Activated CD8-positive, alpha-beta T cell treated with anti-CD3 and anti-CD28 coated beads for 36 hours (primary cell): ENCODE measurements at regions of chr12 and their contacts with region 1.

Region 1: GRCh38 chr12:57261428-57261865 is 10.5 kb upstream of the STAC3 start:
- DNase-seq: no peak
- ATAC-seq: no peak
- H3K4me3 Mint-ChIP-seq: no peak overlapping the region
- H3K27ac Mint-ChIP-seq: no peak overlapping the region
- H3K4me1 Mint-ChIP-seq: peaks cover 4% of the 10 kb centered on the region
- H3K27me3 Mint-ChIP-seq: no peaks in the 10 kb centered on the region
- CTCF ChIP-seq: no peak

Region 2: GRCh38 chr12:57233357-57234232 is 27.9 kb before region 1 on chr12:
- CTCF ChIA-PET with region 1: no interaction called
- POLR2A ChIA-PET with region 1: no interaction called
- intact Hi-C with region 1: no loop called
- DNase-seq: no peak
- ATAC-seq: no peak
- H3K4me3 Mint-ChIP-seq: no peak overlapping the region
- H3K27ac Mint-ChIP-seq: no peak overlapping the region
- H3K4me1 Mint-ChIP-seq: peaks cover 61% of the 10 kb centered on the region
- H3K27me3 Mint-ChIP-seq: peaks cover 13% of the 10 kb centered on the region
- CTCF ChIP-seq: no peak

Region 3: GRCh38 chr12:57248934-57249742 is 12.3 kb before region 1 on chr12:
- CTCF ChIA-PET with region 1: interaction called, 22 read pairs
- POLR2A ChIA-PET with region 1: interaction called, 3 read pairs
- intact Hi-C with region 1: no loop called
- DNase-seq: no peak
- ATAC-seq: peak; percentile 53
- H3K4me3 Mint-ChIP-seq: peak overlapping the region; percentile 15
- H3K27ac Mint-ChIP-seq: no peak overlapping the region
- H3K4me1 Mint-ChIP-seq: peaks cover 7% of the 10 kb centered on the region
- H3K27me3 Mint-ChIP-seq: peaks cover under 1% of the 10 kb centered on the region
- CTCF ChIP-seq: no peak

Region 4: DNA sequence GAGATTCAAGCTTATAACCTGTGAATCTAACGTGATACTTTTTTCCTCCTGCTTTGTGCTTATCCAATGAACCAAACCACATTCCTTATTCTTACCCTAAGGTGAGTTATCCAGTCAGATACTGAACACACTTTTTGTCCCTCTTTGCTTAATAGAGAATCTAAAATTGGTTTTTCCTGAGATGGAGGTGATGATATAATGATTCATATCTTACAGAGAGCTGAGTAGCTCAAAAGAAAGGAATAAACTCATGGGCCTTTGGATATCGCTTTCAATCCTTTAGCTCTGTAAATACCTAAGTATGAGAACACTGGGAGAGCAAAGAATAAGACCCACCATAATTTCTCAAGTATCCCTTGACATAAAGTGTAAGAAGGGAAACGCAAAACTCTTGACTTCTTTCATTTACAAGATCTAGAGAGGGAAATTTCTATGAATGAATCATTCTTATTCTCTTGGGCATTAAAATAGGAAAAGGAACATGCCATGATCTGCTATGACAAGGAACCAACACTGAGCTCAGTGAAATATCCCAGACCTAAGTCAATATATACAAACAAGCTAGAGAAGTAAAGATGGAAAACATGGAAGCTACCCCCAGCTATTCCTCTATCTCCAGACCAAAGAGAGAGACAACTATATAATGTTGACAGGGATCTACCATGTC is 71.3 kb after region 1 on chr12:
- CTCF ChIA-PET with region 1: no interaction called
- POLR2A ChIA-PET with region 1: no interaction called
- intact Hi-C with region 1: no loop called
- DNase-seq: no peak
- ATAC-seq: no peak
- H3K4me3 Mint-ChIP-seq: no peak overlapping the region
- H3K27ac Mint-ChIP-seq: no peak overlapping the region
- H3K4me1 Mint-ChIP-seq: no peaks in the 10 kb centered on the region
- H3K27me3 Mint-ChIP-seq: no peaks in the 10 kb centered on the region
- CTCF ChIP-seq: no peak